Dorsolateral prefrontal cortex (tissue), 120 donors: ENCODE measurements at regions of chr1 and their contacts with region 1.

Region 1: DNA sequence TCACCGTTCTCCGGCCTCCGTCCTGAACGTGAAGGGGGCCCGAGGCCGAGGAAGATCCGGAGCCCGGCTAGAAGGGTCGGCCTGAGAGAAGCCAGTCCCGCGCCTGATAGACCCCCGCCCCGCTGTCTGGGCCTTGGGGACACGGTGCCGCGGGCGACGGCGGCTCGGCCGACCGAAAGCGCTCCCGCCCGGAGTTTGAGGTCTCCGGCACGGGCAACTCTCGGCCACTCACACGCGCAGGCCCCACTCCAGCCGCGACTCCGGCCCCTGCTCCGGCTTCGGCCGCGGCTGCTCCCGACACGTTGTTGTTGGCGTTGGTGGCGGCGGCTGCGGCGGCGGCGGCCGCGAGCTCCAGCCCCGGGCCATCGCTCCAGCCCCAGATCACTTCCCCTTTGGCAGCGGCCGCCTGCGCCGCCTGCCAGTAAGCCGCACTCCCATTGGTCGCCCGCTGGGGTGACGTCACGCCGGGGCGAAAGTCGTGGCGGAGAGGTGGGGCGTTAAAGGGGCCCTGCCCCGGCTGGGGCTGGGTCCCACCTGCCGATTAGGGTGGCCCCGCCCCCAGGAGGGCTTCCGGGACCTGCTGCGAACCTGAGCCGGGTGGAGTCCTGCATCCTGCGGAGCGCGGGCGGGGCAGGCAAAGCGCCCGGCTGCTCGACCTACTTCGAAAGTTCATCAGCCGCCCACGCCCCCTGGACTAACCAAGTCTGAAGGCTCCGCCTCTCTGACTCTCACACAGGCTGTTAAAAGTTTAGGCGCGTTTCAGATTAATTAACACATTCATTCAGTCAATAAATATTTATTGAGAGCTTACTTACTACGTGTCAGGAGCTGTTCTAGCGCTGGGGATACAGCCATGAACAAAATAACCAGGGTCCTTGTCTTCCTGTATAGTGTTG is at the start of gene EFCAB14:
- DNase-seq: peak; percentile 88 to 98 (median 92)
- H3K4me3 ChIP-seq: peak within 1 kb of the TSS; percentile 74 to 100 (median 99)
- H3K27ac ChIP-seq: peak within 1 kb of the TSS; percentile 3 to 92 (median 75)
- H3K27me3 ChIP-seq: no peaks in the 10 kb centered on the region
- CTCF ChIP-seq: peak in 31 of 56 donors; percentile 6 to 58 (median 26)
- total RNA-seq, gene EFCAB14: 50.4 to 120 (median 78.0) TPM

Region 2: DNA sequence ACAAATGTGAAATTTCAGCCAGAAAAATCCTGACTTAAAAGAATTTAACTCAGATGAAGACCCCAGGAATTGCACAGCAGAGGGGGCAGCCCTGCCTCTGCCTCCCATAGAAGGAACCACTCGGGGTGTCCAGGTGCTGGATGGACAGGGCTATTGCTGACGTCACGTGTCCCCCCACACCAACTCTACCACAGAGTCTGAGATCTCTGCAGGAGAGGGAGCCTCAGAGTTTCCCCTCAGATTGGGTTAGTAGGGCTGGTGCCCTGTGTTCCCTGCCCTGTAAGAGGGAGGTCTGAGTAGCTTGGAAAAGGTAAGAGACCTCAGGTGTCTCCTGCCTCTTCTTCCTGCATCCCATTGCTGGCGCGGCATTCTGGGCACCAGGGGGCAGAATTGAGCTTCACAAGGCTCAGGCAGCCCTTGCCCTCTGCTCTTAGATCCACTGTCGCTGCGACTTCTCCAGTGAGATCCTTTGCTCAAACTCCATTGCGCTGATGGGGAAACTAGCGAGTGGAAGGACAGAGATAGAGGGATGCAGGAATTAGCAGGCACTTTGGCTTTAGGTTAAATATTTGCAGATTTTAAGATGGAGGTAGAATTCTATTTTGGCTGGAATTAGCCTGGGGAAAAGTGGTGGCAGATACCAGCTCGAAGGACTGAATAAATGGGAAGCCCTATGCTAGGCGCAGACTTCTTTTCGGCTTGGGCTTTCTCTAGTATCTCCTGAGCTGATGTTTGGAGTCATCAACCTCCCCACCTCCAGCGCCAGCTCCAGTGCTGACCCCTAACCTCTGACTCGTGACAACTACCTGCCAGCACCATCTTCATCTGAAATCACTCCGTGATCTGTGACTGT is 272.1 kb before region 1 on chr1:
- intact Hi-C with region 1: loop called (anchors 5 to 10 kb)
- DNase-seq: peak; percentile 74 to 86 (median 80)
- H3K4me3 ChIP-seq: no peak overlapping the region
- H3K27ac ChIP-seq: no peak overlapping the region
- H3K27me3 ChIP-seq: peaks cover 0 to 21% (median 9%) of the 10 kb centered on the region in 45 donors
- CTCF ChIP-seq: peak; percentile 42 to 94 (median 88)

Region 3: DNA sequence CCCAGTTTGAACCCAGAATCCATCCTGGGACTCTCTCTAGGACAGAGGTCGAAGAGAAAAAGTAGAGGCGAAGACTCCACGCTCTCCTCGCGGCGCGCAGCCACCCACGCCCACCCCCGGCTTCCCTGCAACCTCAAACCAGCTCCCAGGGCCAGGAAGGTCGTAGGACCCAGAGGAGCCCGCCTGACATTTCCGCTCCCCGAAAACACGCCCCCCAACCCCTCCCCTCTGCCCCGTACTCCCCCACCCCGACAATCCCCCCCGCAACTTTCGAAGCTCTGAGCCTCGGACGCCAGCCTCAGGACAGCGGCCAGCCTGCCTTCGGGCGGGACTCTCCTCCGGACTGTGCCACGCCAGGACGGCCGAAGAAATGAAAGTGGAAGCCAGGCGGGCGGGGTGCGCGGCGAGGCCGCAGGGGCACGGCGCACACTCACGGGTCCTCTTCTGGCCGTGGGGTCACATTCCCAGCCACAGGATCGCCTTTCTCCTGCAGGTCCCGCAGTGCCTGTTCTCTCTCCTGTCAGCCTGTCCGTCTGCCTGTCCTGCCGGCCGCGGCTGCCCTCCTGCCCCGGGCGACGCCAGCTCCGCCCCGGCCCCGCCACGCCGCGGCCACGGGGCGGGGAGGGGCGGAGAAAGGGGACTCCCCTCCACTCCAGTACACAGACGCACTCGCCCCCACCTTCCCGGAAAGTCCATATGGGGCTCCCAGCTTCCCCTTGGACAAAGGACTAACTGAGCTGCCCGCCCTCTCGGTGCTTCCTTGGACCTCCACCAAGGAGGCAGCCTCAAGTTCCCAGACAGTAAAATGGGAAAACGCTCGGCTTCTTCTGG is 102.5 kb before region 1 on chr1 and contains the start of gene MOB3C:
- intact Hi-C with region 1: loop called (anchors 5 to 10 kb)
- DNase-seq: peak; percentile 51 to 86 (median 71)
- H3K4me3 ChIP-seq: peak within 1 kb of the TSS; percentile 67 to 98 (median 83)
- H3K27ac ChIP-seq: peak within 1 kb of the TSS in 58 of 59 donors; percentile 18 to 96 (median 83)
- H3K27me3 ChIP-seq: no peaks in the 10 kb centered on the region
- CTCF ChIP-seq: peak in 2 of 56 donors; percentile 7 to 10
- total RNA-seq, gene MOB3C: 5.7 to 25.1 (median 10.2) TPM

Region 4: GRCh38 chr1:46667782-46668760 is 50.9 kb before region 1 on chr1 and contains the start of gene ATPAF1:
- intact Hi-C with region 1: loop called (anchors 2 to 5 kb)
- DNase-seq: peak; percentile 58 to 83 (median 72)
- H3K4me3 ChIP-seq: peak within 1 kb of the TSS; percentile 69 to 99 (median 94)
- H3K27ac ChIP-seq: peak within 1 kb of the TSS; percentile 24 to 94 (median 88)
- H3K27me3 ChIP-seq: no peaks in the 10 kb centered on the region
- CTCF ChIP-seq: peak in 15 of 56 donors; percentile 2 to 46 (median 20)
- total RNA-seq, gene ATPAF1: 65.7 to 127 (median 93.4) TPM